Natural killer cell (primary cell): ENCODE measurements at regions of chr5 and their contacts with region 1.

Region 1: GRCh38 chr5:85049020-85049419 is 664.3 kb upstream of the EDIL3 start:
- DNase-seq: no peak
- ATAC-seq: no peak
- H3K4me3 ChIP-seq: no peak overlapping the region
- H3K4me3 Mint-ChIP-seq: no peak overlapping the region
- H3K27ac ChIP-seq: no peak overlapping the region
- H3K27ac Mint-ChIP-seq: no peak overlapping the region
- H3K4me1 ChIP-seq: no peaks in the 10 kb centered on the region
- H3K4me1 Mint-ChIP-seq: no peaks in the 10 kb centered on the region
- H3K27me3 ChIP-seq: no peaks in the 10 kb centered on the region
- H3K27me3 Mint-ChIP-seq: no peaks in the 10 kb centered on the region
- CTCF ChIP-seq: no peak

Region 2: GRCh38 chr5:85010014-85010562 is 38.9 kb before region 1 on chr5:
- intact Hi-C with region 1: loop called (anchors 1 kb)
- DNase-seq: no peak
- ATAC-seq: no peak
- H3K4me3 ChIP-seq: no peak overlapping the region
- H3K4me3 Mint-ChIP-seq: no peak overlapping the region
- H3K27ac ChIP-seq: no peak overlapping the region
- H3K27ac Mint-ChIP-seq: no peak overlapping the region
- H3K4me1 ChIP-seq: no peaks in the 10 kb centered on the region
- H3K4me1 Mint-ChIP-seq: no peaks in the 10 kb centered on the region
- H3K27me3 ChIP-seq: no peaks in the 10 kb centered on the region
- H3K27me3 Mint-ChIP-seq: no peaks in the 10 kb centered on the region
- CTCF ChIP-seq: no peak